Cardiac septum (tissue), 1 donor: ENCODE measurements at regions of chr9 and their contacts with region 1.

Region 1: GRCh38 chr9:35538361-35539234 is 48.7 kb downstream of the RUSC2 start:
- DNase-seq: peak; percentile 85

Region 2: GRCh38 chr9:35051069-35051967 is 487.3 kb before region 1 on chr9:
- intact Hi-C with region 1: no loop called
- DNase-seq: no peak

Region 3: GRCh38 chr9:35489313-35490154 is 49.1 kb before region 1 on chr9 and contains the start of gene RUSC2:
- intact Hi-C with region 1: loop called (anchors 5 kb)
- DNase-seq: peak; percentile 93
- total RNA-seq, gene RUSC2: 44.5 TPM

Region 4: DNA sequence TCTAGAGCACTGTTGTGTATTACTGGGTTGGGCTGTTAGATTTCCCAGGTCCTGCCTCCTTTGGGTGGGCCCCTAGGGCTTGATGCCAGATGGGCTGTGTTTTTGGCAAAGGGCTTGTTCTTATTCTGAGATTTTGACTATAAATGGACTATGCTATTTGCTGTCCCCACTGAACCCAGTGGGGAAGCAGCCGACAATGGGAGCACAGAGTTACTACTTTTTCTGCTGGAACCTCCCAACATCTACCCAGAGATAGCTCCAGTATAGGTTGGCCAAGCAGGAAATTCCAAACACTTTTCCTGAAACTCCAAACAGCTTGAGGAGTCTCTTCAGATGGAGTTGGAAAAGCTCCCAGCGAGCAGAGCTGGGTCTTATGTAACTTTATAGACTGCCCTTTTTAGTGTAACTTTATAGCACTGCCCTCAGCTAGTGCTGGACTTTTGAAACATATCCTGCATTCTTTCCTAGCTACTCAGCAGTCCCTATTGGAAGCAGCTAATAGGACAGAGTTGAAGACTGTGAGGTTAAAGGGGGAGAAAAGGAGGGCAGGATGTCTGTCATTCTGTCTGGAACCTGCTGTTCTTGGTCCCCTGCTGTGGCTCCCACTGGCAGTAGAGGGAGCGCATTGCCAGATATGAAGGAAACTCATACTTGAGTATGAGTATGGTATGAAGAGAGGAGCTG is 27.7 kb before region 1 on chr9:
- intact Hi-C with region 1: loop called (anchors 2 kb)
- DNase-seq: peak; percentile 84

Region 5: GRCh38 chr9:35553670-35554543 is 15.3 kb after region 1 on chr9:
- intact Hi-C with region 1: no loop called
- DNase-seq: no peak

Region 6: GRCh38 chr9:36461323-36461722 is 922.7 kb after region 1 on chr9:
- intact Hi-C with region 1: no loop called
- DNase-seq: no peak